GM12878 (cell line): ENCODE measurements at regions of chr10 and their contacts with region 1.

Region 1: DNA sequence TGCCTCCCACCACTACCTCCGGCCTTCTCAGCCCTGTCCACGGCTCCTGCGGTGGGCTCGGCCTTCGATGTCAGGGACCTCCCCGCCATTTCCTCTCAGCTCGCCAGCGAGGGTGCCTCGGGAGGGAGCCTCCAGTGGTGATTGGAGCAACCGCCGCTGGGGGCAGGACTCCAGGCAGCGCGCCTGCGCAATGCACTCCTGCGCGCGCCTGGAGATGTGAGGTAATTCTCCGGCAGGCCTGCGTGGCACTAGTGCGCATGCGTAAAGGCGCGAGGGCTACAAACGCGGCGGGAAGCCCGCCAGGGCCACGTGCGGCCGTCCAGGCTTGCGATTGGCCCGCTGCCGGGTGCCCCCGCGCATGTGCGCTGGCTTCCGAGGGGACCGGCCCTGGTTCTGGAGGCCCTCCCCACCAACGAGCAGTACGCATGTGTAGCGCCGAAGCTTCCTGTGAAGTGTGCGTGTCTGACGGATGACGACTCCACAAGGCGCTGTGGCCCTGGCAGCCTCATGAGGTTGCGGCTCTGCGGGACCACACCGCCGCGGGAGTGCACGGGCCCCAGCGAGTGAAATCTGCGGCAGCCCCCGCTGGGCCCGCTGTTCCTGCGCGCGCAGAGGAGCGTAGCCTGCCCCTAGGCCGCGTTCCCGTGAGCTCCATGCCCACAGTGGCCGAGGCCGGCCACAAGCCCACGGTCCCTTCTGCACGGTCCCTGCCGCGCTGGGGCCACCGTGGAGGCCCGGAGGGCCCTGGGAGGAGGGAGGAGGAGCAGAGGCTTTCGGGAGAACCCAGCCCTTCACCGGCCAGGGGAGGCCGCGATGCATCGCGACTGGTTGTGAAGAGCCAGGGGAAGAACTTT is at the start of gene SYCE1:
- DNase-seq: no peak
- ATAC-seq: no peak
- H3K4me3 ChIP-seq: no peak within 1 kb of the TSS
- H3K27ac ChIP-seq: no peak within 1 kb of the TSS
- H3K4me1 ChIP-seq: no peaks in the 10 kb centered on the region
- H3K27me3 ChIP-seq: no peaks in the 10 kb centered on the region
- CTCF ChIP-seq: no peak
- EP300 ChIP-seq: no peak
- POLR2A ChIP-seq: no peak
- RAD21 ChIP-seq: no peak
- polyA plus RNA-seq, gene SYCE1: not detected

Region 2: DNA sequence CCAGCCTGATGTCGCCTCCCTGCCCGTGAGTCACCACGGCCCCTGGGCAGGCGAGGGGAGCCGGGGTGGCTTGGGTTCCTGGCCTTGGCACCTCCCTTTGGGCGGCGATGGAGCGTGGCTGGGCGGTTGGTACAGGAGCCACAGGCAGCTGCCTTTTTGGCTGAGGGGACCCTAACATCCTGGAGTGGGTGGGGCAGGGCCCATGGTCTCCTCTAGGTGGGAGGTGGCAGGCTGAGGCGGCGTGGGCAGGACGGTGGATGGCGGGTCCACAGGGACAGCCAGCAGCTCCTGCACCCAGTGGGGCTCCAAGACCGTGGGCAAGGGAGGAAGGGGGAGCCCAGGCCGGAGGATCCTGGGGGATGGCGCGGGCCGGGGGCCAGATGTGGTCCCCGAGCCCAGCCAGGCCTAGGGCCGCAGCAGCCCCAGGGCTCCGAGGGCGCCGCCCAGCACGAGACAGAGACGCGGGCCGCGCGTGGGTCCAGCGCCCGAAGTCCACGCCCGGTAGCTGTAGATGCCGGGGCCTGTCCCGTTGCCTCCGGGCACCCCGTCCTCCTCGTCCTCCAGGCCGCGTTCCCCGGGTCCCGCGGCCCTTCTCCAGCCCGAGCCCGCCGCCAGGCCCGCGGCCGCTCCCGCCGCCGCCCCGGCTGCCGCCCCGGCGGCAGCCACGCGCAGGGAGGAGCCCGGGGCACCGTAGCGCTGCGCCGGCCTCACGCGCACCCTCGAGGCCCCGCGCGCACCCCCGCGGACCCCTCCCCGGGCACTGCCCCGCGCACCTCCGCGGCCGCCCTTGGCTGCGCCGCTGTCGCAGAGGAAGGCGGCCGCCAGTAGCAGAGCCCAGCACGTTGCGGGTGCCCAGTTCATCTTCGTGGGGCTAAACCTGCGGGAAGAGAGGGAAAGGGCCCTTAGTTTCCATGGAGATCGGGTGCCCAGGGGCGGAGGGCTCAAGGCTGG is 142.6 kb before region 1 on chr10:
- CTCF ChIA-PET with region 1: no interaction called
- POLR2A ChIA-PET with region 1: no interaction called
- RAD21 ChIA-PET with region 1: no interaction called
- SMC1A ChIA-PET with region 1: no interaction called
- in situ Hi-C with region 1: loop called (anchors 5 kb)
- intact Hi-C with region 1: no loop called
- DNase-seq: no peak
- ATAC-seq: peak; percentile 11
- H3K4me3 ChIP-seq: no peak overlapping the region
- H3K27ac ChIP-seq: no peak overlapping the region
- H3K4me1 ChIP-seq: no peaks in the 10 kb centered on the region
- H3K27me3 ChIP-seq: no peaks in the 10 kb centered on the region
- CTCF ChIP-seq: no peak
- EP300 ChIP-seq: no peak
- POLR2A ChIP-seq: peak; percentile 58
- RAD21 ChIP-seq: no peak

Region 3: DNA sequence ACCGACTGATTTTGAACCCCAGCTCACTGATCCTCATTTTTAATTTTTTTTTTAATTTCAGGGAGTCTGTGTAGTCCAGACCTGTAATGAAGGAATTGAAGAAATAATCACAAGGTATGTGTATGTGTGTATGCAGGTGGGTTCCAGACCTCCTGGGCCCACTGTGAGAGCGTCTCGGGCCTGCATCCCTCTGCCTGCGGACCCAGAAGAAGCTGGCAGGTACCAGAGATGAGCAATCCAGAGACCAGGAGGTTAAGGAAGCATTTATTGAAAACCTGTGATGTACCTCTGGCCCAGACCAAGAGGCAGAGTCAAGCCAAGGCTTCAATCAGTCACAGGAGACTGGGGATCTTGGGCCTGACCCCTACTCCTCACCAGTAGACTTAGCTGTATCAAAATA is 11.1 kb before region 1 on chr10:
- CTCF ChIA-PET with region 1: no interaction called
- POLR2A ChIA-PET with region 1: no interaction called
- RAD21 ChIA-PET with region 1: no interaction called
- SMC1A ChIA-PET with region 1: no interaction called
- in situ Hi-C with region 1: no loop called
- intact Hi-C with region 1: no loop called
- DNase-seq: no peak
- ATAC-seq: no peak
- H3K4me3 ChIP-seq: no peak overlapping the region
- H3K27ac ChIP-seq: no peak overlapping the region
- H3K4me1 ChIP-seq: no peaks in the 10 kb centered on the region
- H3K27me3 ChIP-seq: no peaks in the 10 kb centered on the region; a peak in 1 of 4 replicates
- CTCF ChIP-seq: no peak
- EP300 ChIP-seq: no peak
- POLR2A ChIP-seq: no peak
- RAD21 ChIP-seq: no peak